HepG2 (cell line): ENCODE measurements at regions of chr20 and their contacts with region 1.

Region 1: GRCh38 chr20:50366270-50367103 is 143.7 kb upstream of the PTPN1 start:
- DNase-seq: peak; percentile 100
- ATAC-seq: peak; percentile 77
- H3K4me3 ChIP-seq: peak overlapping the region in 2 of 3 experiments; percentile 29 to 31; a peak in 2 of 6 replicates
- H3K27ac ChIP-seq: peak overlapping the region; percentile 71
- H3K4me1 ChIP-seq: peaks cover 87% of the 10 kb centered on the region
- H3K27me3 ChIP-seq: peaks cover 0 to 12% of the 10 kb centered on the region in 2 experiments; a peak in 3 of 5 replicates
- CTCF ChIP-seq: 0 out of 2 replicates have a peak, but pooled peaks have one; percentile 11
- EP300 ChIP-seq: peak; percentile 79 to 93
- POLR2A ChIP-seq: no peak
- RAD21 ChIP-seq: peak; percentile 8; the same call in 1 of the 2 replicates

Region 2: DNA sequence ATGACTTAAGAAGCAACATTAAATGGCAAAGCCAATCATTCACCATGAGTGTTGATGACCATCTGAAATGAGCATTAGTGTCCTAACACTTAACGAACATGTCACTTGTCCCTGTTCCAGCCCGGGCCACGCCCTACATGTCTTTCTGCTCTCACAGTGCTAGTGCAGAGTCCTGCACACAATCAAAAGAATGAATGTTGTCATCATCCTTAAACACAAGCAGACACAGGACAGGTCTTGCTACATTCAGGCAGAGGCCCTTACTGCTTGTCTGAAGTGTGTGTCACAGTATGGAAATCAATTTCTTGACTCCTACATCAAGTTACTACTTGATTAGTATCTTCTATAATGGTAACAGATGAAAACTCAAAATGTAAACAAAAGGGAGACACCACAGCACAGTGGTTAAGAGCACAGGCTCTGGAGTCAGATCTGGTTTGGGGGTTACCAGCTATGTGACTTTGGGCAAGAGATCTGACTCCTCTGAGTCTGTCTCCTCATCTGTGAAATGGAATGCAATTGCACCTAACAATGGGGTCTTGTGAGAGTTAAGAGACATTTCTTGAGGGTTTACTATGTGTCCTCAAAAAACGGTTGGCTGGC is 270.9 kb before region 1 on chr20:
- CTCF ChIA-PET with region 1: no interaction called
- POLR2A ChIA-PET with region 1: no interaction called
- in situ Hi-C with region 1: no loop called
- intact Hi-C with region 1: no loop called
- DNase-seq: no peak
- ATAC-seq: no peak
- H3K4me3 ChIP-seq: no peak overlapping the region
- H3K27ac ChIP-seq: no peak overlapping the region
- H3K4me1 ChIP-seq: peaks cover 6% of the 10 kb centered on the region
- H3K27me3 ChIP-seq: no peaks in the 10 kb centered on the region
- CTCF ChIP-seq: no peak
- EP300 ChIP-seq: no peak
- POLR2A ChIP-seq: no peak
- RAD21 ChIP-seq: no peak

Region 3: DNA sequence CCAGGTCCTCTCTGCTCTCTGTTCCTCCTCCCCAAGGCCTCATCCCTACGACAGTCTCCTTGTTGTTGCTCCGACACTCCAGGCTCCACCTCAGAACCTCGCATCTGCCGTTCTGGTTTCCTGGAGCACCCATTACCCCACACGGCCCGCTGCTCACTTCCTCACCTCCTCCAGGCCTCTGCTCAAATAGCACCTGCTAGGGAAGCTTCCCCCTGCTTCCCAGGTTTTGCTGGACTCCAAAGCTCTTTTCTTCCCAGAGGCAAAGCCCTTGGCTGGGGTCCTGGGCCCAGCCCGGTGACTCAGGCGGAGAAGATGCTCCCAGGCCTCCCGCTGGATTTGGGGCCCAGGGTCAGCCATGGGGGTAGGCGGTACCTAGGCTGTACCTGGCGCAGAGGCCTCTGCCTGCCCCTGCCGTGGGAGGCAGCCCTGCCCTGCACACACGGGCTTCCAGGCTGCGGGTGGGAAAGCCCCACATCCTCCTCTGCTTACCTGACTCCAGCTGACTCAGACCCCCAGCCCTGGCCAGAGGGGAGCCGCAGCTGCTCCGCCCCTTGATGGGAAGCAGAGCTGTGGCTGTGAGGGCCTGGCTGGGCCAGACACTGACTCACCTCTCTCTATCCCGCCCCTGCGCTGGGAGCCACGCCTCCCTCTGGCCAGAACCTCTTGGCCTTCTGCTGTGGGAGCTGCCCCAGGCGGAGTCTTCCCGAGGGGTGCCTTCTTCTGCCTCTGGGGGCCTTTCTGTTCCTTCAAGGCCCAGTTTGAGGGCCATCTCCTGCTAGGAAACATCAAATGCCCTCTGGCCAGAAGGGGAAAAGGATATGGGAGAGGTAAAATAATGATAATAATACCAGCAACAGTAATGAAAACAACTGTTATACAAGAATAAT is 45.3 kb before region 1 on chr20:
- CTCF ChIA-PET with region 1: no interaction called
- POLR2A ChIA-PET with region 1: interaction called, 16 read pairs
- in situ Hi-C with region 1: no loop called
- intact Hi-C with region 1: no loop called
- DNase-seq: peak; percentile 85
- ATAC-seq: peak; percentile 95
- H3K4me3 ChIP-seq: peak overlapping the region; percentile 54 to 87 (median 62)
- H3K27ac ChIP-seq: peak overlapping the region; percentile 11
- H3K4me1 ChIP-seq: peaks cover 56% of the 10 kb centered on the region
- H3K27me3 ChIP-seq: no peaks in the 10 kb centered on the region; a peak in 2 of 5 replicates
- CTCF ChIP-seq: peak; percentile 59
- EP300 ChIP-seq: peak; percentile 18 to 47; a peak in 2 of 4 replicates
- POLR2A ChIP-seq: peak; percentile 16 to 86; a peak in 3 of 4 replicates
- RAD21 ChIP-seq: peak; percentile 49; the same call in 1 of the 2 replicates

Region 4: GRCh38 chr20:50354721-50355592 is 11.5 kb before region 1 on chr20:
- CTCF ChIA-PET with region 1: no interaction called
- POLR2A ChIA-PET with region 1: interaction called, 10 read pairs
- in situ Hi-C with region 1: no loop called
- intact Hi-C with region 1: no loop called
- DNase-seq: no peak
- ATAC-seq: peak; percentile 9; the same call in 2 of the 3 replicates
- H3K4me3 ChIP-seq: no peak overlapping the region
- H3K27ac ChIP-seq: no peak overlapping the region
- H3K4me1 ChIP-seq: peaks cover 84% of the 10 kb centered on the region
- H3K27me3 ChIP-seq: peaks cover 8 to 39% of the 10 kb centered on the region in 2 experiments
- CTCF ChIP-seq: no peak
- EP300 ChIP-seq: no peak
- POLR2A ChIP-seq: no peak
- RAD21 ChIP-seq: no peak

Region 5: DNA sequence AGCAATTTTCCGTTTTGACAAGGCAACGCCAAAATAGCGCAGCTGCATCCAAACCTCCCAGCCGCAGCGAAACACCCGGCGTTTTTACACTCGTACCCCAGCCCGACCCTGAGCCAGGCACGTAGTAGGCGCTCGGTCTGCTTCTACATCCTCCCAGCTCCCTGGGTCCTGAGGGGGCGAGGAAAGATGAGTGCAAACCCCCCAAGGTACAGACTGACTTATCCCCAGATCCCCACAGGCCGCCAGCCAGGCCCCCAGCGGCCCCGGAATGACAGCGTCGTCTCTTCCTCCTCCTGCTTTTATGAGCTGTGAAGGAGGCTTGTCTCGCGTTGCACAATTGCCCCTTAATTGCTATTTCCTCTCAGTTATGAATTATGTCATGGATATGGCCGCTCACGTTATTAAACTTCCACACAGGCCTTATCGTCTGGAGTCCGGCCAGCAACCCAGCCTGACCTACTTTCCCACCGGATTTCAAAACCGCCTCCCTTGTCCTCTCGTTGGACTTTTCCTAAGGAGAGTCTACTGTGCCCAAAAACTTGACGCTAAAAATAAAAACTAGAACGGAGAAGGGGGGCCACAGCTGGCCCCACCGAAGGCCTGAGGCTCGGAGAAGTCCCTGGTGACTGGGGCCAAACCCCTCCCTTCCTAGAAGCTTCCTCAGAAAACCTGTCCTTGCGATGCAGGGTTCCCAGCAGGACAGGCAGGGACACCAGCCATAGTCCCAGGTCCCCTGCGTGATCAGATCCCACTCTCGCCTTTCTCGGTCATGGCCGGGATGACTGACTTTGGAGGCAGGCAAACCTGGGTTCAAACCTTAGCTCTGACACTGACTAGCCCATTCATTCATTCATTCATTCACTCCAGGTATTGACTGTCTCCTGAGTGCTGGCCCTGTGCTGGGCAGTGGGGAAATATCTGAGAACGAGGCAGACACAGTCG is 12.8 kb after region 1 on chr20:
- CTCF ChIA-PET with region 1: no interaction called
- POLR2A ChIA-PET with region 1: interaction called, 14 read pairs
- in situ Hi-C with region 1: no loop called
- intact Hi-C with region 1: loop called (anchors 1 kb)
- DNase-seq: no peak
- ATAC-seq: no peak
- H3K4me3 ChIP-seq: peak overlapping the region in 1 of 3 experiments; percentile 12; a peak in 1 of 6 replicates
- H3K27ac ChIP-seq: peak overlapping the region; percentile 4
- H3K4me1 ChIP-seq: peaks cover 86% of the 10 kb centered on the region
- H3K27me3 ChIP-seq: no peaks in the 10 kb centered on the region
- CTCF ChIP-seq: no peak
- EP300 ChIP-seq: no peak
- POLR2A ChIP-seq: no peak
- RAD21 ChIP-seq: no peak

Region 6: DNA sequence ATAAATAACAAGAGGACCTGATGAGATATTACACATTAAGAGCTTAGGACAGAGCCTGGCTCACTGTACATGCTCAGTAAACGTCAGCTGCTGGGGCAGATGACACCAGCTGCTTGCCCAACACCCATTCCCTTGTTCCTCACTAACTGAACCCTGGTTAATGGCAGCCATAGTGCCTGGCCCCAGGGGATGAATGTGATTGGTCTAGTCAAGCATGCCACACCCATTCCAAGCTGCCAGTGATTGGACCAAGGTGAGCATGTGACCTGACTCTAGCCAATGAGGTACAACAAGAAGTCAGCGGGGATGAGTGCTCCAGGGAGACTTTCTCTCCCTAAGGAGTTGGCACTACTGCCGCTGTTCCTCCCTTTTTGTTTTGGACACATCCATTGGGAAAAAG is 58.6 kb after region 1 on chr20:
- CTCF ChIA-PET with region 1: no interaction called
- POLR2A ChIA-PET with region 1: interaction called, 16 read pairs
- in situ Hi-C with region 1: no loop called
- intact Hi-C with region 1: no loop called
- DNase-seq: peak; percentile 61
- ATAC-seq: peak; percentile 12; the same call in 2 of the 3 replicates
- H3K4me3 ChIP-seq: no peak overlapping the region
- H3K27ac ChIP-seq: no peak overlapping the region
- H3K4me1 ChIP-seq: peaks cover 84% of the 10 kb centered on the region
- H3K27me3 ChIP-seq: no peaks in the 10 kb centered on the region
- CTCF ChIP-seq: no peak
- EP300 ChIP-seq: no peak
- POLR2A ChIP-seq: no peak
- RAD21 ChIP-seq: no peak

Region 7: DNA sequence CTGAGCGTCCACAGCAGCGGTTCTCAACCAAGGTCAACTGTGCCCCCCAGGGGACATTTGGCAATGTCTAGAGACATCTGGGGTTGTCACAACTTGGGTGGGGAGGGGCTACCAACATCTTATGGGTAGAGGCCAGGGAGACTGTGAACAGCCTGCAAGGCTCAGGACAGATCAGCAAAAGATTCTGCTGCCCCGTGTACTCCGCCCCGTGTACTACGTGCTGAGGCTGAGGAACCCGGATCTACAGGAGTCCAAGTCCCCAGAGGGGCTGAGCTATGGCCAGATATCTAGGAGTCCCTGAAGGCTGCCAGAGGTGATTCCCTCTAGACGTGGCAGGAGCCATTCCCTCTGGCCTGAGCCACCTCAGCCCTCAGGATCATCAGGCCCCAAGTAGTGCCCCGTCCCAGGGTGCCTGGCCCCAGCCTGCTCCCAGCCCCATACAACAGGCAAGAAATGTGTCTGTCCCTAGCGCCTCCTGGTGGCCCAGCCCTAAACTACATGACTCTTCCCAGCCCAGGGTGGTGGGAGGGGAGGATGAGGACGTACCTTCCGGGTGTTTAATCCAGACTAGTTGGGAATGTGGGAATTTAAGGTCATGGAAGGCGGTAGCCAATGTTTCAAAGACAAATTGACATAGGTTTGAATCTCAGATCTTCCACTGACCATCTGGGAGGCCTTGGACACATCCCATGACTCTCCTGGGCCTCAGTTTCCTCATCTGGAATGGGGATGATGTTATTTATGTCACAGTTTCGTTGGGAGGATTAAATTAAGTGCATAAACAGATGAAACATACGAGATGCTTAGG is 94.2 kb after region 1 on chr20:
- CTCF ChIA-PET with region 1: no interaction called
- POLR2A ChIA-PET with region 1: interaction called, 13 read pairs
- in situ Hi-C with region 1: no loop called
- intact Hi-C with region 1: no loop called
- DNase-seq: peak; percentile 91
- ATAC-seq: peak; percentile 85
- H3K4me3 ChIP-seq: peak overlapping the region; percentile 15 to 64 (median 35); a peak in 5 of 6 replicates
- H3K27ac ChIP-seq: peak overlapping the region; percentile 45
- H3K4me1 ChIP-seq: peaks cover 89% of the 10 kb centered on the region
- H3K27me3 ChIP-seq: no peaks in the 10 kb centered on the region
- CTCF ChIP-seq: peak; percentile 100
- EP300 ChIP-seq: peak in 1 of 2 experiments; percentile 60; a peak in 3 of 4 replicates
- POLR2A ChIP-seq: peak in 1 of 2 experiments; percentile 28; a peak in 1 of 4 replicates
- RAD21 ChIP-seq: peak; percentile 100

Region 8: DNA sequence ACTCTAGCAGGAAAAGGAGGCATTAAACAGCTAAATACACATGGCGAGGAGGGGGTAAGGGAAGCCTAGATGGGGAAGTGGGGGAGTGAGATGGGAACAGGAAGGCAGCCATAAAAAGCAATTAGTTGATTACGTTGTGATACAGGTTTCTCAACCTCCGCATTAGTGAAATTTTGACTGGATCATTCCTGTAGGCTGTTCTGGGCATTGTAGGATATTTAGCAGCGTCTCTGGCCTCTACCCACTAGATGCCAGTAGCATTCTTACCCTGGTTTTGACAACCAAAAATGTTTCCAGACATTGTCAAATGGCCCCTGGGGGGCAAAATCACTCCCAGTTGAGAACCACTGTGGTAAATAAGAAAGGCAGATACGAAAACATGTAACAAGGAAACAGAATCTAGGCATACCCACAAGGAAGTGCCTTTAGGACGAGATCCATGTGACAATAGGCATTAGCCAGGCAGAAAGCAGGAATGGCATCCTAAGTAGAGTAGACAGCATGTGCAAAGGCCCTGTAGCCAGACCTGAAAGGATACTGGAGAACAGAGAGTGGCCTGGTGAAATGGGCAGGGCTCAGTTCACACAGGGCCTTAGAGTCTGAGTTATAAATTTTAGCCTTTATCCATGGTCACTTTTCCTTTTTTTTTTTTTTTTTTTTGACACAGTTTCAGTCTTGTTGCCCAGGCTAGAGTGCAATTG is 117.9 kb after region 1 on chr20:
- CTCF ChIA-PET with region 1: no interaction called
- POLR2A ChIA-PET with region 1: no interaction called
- in situ Hi-C with region 1: no loop called
- intact Hi-C with region 1: no loop called
- DNase-seq: no peak
- ATAC-seq: no peak
- H3K4me3 ChIP-seq: peak overlapping the region in 2 of 3 experiments; percentile 54 to 69; a peak in 2 of 6 replicates
- H3K27ac ChIP-seq: no peak overlapping the region
- H3K4me1 ChIP-seq: peaks cover 25% of the 10 kb centered on the region
- H3K27me3 ChIP-seq: peaks cover 0 to 15% of the 10 kb centered on the region in 2 experiments; a peak in 2 of 5 replicates
- CTCF ChIP-seq: no peak
- EP300 ChIP-seq: no peak
- POLR2A ChIP-seq: no peak
- RAD21 ChIP-seq: no peak